ENCODE measurements at regions of chr4 and their contacts with region 1.

Region 1: DNA sequence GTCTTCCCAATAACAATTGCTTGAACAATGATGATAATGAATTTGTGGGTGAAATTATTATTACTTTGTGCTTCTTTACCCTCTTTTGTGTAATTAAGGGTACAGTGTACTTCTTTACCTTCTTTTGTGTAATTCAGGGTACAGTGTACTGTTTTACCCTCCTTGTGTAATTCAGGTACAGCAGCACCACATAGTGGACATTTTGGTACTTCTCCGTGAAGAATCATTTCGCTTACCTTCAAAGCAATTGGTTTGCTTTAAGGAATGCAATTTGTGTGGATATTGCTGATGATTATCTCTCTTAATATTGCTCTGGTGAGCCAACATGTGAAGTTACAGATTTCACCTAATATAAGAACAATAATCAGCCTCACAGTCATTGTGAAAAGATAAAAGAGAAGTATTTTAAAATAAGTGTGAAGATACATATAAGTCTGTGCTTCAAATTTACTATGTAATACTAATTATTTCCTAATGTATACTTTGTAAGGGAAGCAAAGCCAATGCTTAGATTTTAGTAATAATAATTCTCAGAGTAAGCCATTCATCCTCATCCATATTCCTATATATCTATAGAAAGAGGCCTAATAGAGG is 27.2 kb upstream of the SEC24B start:
- DNase-seq: peak; percentile 43
- ATAC-seq: peak; percentile 82
- H3K4me3 ChIP-seq: no peak overlapping the region
- H3K27ac ChIP-seq: no peak overlapping the region
- H3K4me1 ChIP-seq: no peaks in the 10 kb centered on the region
- H3K27me3 ChIP-seq: no peaks in the 10 kb centered on the region
- CTCF ChIP-seq: peak; percentile 80
- EP300 ChIP-seq: no peak
- POLR2A ChIP-seq: no peak
- RAD21 ChIP-seq: no peak

Region 2: DNA sequence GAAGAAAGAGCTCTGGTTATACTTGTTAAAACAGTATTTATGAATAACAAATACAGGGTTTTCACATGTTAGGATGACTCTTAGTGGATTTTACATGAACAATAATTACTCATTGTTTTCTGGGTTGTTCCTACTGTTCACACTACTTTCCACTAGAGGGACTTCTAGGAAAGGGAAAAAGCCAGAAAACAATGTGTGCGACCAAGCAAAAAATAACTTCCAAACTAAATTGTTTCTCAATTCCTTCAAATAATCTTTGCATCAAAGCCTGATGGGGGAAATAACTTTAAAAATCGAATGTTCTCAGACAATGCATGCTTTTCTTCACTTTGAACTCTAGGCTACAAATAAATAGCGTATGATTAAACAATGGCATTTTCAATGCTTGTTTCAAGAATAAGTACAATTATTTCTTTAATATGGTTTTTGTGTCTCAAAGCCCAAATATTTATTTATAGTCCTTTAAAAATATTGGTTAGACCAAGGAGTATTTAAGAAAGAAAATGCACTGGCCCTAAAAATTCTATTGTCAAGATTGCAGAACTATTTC is 571.5 kb before region 1 on chr4:
- CTCF ChIA-PET with region 1: interaction called, 14 read pairs
- POLR2A ChIA-PET with region 1: no interaction called
- in situ Hi-C with region 1: loop called (anchors 10 kb)
- intact Hi-C with region 1: loop called (anchors 1 kb)
- DNase-seq: peak; percentile 23
- ATAC-seq: peak; percentile 74
- H3K4me3 ChIP-seq: no peak overlapping the region
- H3K27ac ChIP-seq: no peak overlapping the region
- H3K4me1 ChIP-seq: no peaks in the 10 kb centered on the region
- H3K27me3 ChIP-seq: no peaks in the 10 kb centered on the region
- CTCF ChIP-seq: peak; percentile 58
- EP300 ChIP-seq: no peak
- POLR2A ChIP-seq: no peak
- RAD21 ChIP-seq: no peak

Region 3: GRCh38 chr4:109275086-109275745 is 131.2 kb before region 1 on chr4:
- CTCF ChIA-PET with region 1: no interaction called
- POLR2A ChIA-PET with region 1: no interaction called
- in situ Hi-C with region 1: no loop called
- intact Hi-C with region 1: no loop called
- DNase-seq: no peak
- ATAC-seq: no peak
- H3K4me3 ChIP-seq: no peak overlapping the region
- H3K27ac ChIP-seq: no peak overlapping the region
- H3K4me1 ChIP-seq: no peaks in the 10 kb centered on the region
- H3K27me3 ChIP-seq: no peaks in the 10 kb centered on the region
- CTCF ChIP-seq: no peak
- EP300 ChIP-seq: no peak
- POLR2A ChIP-seq: no peak
- RAD21 ChIP-seq: no peak

Measured in HepG2 (cell line).